MCF 10A (cell line): ENCODE measurements at regions of chr10 and their contacts with region 1.

Region 1: GRCh38 chr10:8721650-8722049 is 667.2 kb downstream of the GATA3 start:
- DNase-seq: peak; percentile 71
- H3K4me3 Mint-ChIP-seq: no peak overlapping the region
- H3K27ac Mint-ChIP-seq: peak overlapping the region; percentile 78
- H3K4me1 Mint-ChIP-seq: peaks cover 12% of the 10 kb centered on the region
- H3K27me3 Mint-ChIP-seq: no peaks in the 10 kb centered on the region
- CTCF ChIP-seq: no peak

Region 2: GRCh38 chr10:8705415-8705814 is 16.2 kb before region 1 on chr10:
- CTCF ChIA-PET with region 1: no interaction called
- POLR2A ChIA-PET with region 1: interaction called, 25 read pairs
- intact Hi-C with region 1: no loop called
- DNase-seq: no peak
- H3K4me3 Mint-ChIP-seq: no peak overlapping the region
- H3K27ac Mint-ChIP-seq: peak overlapping the region; percentile 63
- H3K4me1 Mint-ChIP-seq: peaks cover 11% of the 10 kb centered on the region
- H3K27me3 Mint-ChIP-seq: no peaks in the 10 kb centered on the region
- CTCF ChIP-seq: no peak